ENCODE measurements at regions of chr11 and their contacts with region 1.

Region 1: GRCh38 chr11:119018074-119018938 is at the starts of genes RPS25 and TRAPPC4:
- DNase-seq: peak; percentile 93 to 96
- ATAC-seq: peak; percentile 95 to 98 (median 96)
- H3K4me3 ChIP-seq: peak within 1 kb of the TSS; percentile 81 to 99 (median 86)
- H3K27ac ChIP-seq: peak within 1 kb of the TSS; percentile 80 to 98 (median 94)
- H3K4me1 ChIP-seq: peaks cover 5 to 50% (median 44%) of the 10 kb centered on the region in 9 donors
- H3K27me3 ChIP-seq: no peaks in the 10 kb centered on the region
- CTCF ChIP-seq: peak in 1 of 9 donors; percentile 30
- total RNA-seq, gene RPS25: 743 to 915 (median 823) TPM
- total RNA-seq, gene TRAPPC4: 29.5 to 51.4 (median 37.5) TPM

Region 2: DNA sequence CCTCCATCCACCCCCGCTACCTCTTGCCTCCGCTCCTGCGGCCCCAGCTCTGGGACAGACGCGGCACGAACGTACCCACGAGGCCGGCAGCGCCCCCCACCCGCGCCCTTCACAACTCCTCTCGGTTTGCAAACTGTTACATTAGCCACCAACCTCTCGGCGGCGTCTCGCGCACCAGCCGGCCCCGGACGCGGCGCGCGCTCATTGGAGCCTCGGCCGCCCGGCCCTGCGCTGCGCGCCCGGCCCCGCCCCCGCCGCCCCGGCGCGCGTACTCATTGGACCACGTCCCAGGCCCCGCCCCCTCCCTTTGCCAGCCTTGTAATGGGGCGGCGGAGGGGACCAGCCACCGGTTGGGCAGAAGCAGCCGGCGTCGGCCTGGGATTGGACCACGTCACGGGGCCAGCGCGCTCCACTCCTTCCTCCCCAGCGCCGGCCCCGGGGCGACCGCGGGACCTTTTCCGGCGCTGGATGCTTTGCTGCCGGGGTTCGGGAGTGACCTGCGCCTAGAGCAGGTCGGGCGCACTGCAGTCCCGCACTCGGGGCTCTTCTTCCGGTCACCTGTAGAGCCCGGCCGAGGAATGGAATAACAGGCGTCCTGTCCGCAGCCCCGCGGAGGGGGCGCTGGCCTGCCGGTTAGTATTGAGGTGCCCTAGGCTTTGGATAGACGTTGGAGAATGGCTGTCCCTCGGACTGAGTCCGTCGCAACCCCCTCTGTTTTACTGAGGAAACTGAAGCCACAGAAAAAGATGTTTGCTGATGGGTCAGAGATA is 38.9 kb after region 1 on chr11 and contains the start of gene HYOU1:
- intact Hi-C with region 1: loop called in 2 of 10 experiments (anchors 2 to 10 kb)
- DNase-seq: peak; percentile 98
- ATAC-seq: peak; percentile 97 to 99 (median 97)
- H3K4me3 ChIP-seq: peak within 1 kb of the TSS; percentile 67 to 99 (median 94)
- H3K27ac ChIP-seq: peak within 1 kb of the TSS; percentile 16 to 94 (median 89)
- H3K4me1 ChIP-seq: peaks cover 15 to 30% (median 25%) of the 10 kb centered on the region in 9 donors
- H3K27me3 ChIP-seq: no peaks in the 10 kb centered on the region
- CTCF ChIP-seq: peak in 3 of 9 donors; percentile 1 to 26 (median 19)
- total RNA-seq, gene HYOU1: 45.0 to 96.4 (median 64.4) TPM

Region 3: GRCh38 chr11:119067371-119068222 is 49.3 kb after region 1 on chr11 and contains the start of gene VPS11:
- intact Hi-C with region 1: loop called in 1 of 10 experiments (anchors 10 kb)
- DNase-seq: peak; percentile 97 to 98
- ATAC-seq: peak; percentile 97 to 99 (median 99)
- H3K4me3 ChIP-seq: peak within 1 kb of the TSS; percentile 65 to 99 (median 87)
- H3K27ac ChIP-seq: peak within 1 kb of the TSS; percentile 62 to 94 (median 88)
- H3K4me1 ChIP-seq: peaks cover 4 to 38% (median 29%) of the 10 kb centered on the region in 9 donors
- H3K27me3 ChIP-seq: no peaks in the 10 kb centered on the region
- CTCF ChIP-seq: no peak
- total RNA-seq, gene VPS11: 15.7 to 23.8 (median 21.5) TPM

Region 4: DNA sequence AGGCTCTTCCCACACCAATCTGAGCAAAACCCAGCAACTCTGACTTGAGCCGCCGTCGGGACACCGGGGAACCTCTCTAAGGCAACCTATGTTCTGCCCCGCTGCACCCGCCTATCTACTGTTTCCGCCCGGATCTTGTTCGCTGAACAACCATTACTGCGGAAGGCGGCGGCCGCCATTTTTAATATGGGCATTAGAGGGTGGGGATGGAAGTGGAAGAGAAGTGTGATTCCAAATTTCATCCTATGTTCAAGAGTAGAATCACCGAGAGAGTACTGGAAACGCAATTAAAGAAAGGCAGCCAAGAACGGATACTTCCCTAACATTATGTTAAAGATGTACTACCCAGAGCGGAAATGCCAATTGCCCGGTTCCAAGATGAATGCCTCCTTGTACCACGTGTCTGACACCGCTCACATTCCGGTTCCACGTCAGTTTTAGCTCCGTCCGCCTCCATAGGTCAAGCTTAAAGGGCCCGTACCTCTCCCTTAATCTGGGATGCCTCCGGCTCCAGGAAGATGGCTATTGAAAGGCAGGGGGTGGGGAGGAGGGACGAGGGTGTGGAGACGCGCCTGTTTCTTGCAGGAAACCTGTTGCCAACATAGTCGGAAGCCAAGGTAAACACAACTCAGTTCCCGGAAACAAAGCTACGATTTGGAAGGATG is 83.6 kb after region 1 on chr11 and contains the start of gene DPAGT1:
- intact Hi-C with region 1: loop called in 1 of 10 experiments (anchors 5 kb)
- DNase-seq: peak; percentile 81 to 95
- ATAC-seq: peak; percentile 94 to 97 (median 96)
- H3K4me3 ChIP-seq: peak within 1 kb of the TSS; percentile 69 to 89 (median 79)
- H3K27ac ChIP-seq: peak within 1 kb of the TSS; percentile 83 to 96 (median 92)
- H3K4me1 ChIP-seq: peaks cover 10 to 50% (median 35%) of the 10 kb centered on the region in 9 donors
- H3K27me3 ChIP-seq: no peaks in the 10 kb centered on the region
- CTCF ChIP-seq: no peak
- total RNA-seq, gene DPAGT1: 8.6 to 23.2 (median 16.5) TPM

Region 5: DNA sequence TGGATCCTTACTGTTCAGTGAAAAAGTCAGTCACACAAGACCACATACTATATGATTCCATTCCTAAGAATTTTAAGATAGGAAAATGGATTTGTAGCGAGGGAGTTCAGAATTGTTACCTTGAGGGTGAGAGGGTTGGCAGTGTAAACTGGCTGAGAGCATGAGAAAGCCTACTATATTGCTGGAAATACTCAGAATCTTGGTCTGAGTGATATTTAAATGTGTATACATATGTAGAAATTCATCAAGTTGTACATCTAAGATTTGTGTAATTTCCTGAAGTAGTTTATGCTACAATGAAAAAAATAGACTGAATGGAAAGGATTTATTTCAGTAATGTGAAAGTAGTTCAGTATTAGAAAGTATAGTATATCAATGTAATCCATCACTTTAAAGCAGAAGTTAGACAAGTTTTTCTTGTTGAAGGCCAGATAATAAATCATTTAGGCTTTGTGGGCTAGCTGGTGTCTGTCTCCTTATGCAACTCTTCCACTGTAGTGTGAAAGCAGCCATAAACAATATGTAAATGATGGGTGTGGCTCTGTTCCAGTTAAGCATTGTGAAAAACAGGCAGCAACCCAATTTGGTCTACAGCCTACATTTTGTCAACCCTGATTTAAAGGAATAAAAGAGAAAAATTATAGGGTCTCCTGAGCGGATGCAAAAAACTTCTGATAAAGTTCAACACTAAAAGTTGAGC is 531.9 kb after region 1 on chr11:
- intact Hi-C with region 1: no loop called
- DNase-seq: no peak
- ATAC-seq: no peak
- H3K4me3 ChIP-seq: no peak overlapping the region
- H3K27ac ChIP-seq: no peak overlapping the region
- H3K4me1 ChIP-seq: no peaks in the 10 kb centered on the region
- H3K27me3 ChIP-seq: no peaks in the 10 kb centered on the region
- CTCF ChIP-seq: no peak

Measured in heart right ventricle (tissue), 16 donors.